ENCODE measurements at regions of chr3 and their contacts with region 1.

Region 1: GRCh38 chr3:33787328-33788009 is 11.0 kb upstream of the PDCD6IP start:
- DNase-seq: peak; percentile 69
- H3K4me3 Mint-ChIP-seq: peak overlapping the region; percentile 28
- H3K27ac Mint-ChIP-seq: no peak overlapping the region
- H3K4me1 Mint-ChIP-seq: no peaks in the 10 kb centered on the region
- H3K27me3 Mint-ChIP-seq: peaks cover 5% of the 10 kb centered on the region

Region 2: DNA sequence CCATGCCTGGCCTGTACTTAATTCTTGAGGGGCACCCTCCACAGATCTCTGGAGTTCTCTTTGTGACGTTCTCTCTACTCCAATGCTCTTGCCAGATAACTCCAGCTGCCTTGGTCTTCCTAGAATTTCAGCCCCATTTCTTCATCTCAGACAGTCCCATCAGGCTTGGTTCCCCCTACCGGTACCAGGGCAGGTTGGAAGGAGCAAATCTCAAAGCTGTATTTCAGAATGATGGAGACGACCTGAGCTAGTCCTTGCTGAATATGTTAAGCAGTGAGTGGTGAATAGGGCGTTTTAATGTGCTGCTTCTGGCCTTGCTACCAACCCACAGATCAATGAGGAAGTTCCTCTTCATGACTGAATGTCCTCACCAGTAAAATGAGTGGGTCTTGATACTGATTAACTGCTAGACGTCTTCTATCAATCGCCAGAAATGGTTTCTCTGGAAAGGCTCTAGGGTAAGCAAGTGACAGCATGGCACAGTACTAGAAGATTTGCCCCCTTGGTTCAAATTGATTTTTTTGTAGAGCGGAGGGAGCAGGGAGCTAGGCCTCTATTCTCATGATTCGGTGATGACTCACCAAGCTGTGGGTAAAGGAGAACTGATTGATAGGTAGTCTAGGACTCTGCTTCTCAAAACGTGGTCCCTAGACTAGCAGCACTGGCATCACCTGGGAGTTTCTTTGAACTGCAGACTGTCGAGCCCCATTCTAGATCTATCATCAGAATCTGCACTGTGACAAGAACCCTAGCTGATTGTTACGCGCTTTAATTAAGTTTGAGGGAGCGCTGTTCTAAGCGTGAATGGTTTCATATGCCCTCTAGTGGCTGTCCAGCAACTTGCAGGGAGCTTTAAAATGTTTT is 415.0 kb before region 1 on chr3:
- CTCF ChIA-PET with region 1: interaction called, 17 read pairs
- POLR2A ChIA-PET with region 1: no interaction called
- intact Hi-C with region 1: loop called (anchors 5 kb)
- DNase-seq: peak; percentile 49
- H3K4me3 Mint-ChIP-seq: no peak overlapping the region
- H3K27ac Mint-ChIP-seq: no peak overlapping the region
- H3K4me1 Mint-ChIP-seq: peaks cover 7% of the 10 kb centered on the region
- H3K27me3 Mint-ChIP-seq: peaks cover 10% of the 10 kb centered on the region

Region 3: DNA sequence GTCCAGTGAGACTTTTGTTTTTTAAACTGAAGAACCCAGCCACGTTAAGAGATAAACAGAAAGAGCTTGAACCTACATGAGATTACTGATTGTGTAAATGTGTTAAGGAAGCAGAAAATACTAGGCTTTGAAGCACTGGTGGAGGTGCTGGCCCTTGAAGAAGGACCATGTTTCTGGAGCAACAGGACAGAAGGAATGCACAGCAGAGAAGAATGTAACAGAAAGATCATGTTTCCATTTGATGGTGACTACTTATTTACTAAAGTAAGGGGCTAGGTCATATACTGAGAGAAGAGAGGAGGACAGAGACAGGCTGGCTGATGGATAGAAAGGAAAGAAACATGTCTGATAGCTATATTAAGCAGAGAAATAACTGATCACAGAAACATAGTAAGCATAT is 158.2 kb before region 1 on chr3:
- CTCF ChIA-PET with region 1: interaction called, 17 read pairs
- POLR2A ChIA-PET with region 1: no interaction called
- intact Hi-C with region 1: no loop called
- DNase-seq: no peak
- H3K4me3 Mint-ChIP-seq: no peak overlapping the region
- H3K27ac Mint-ChIP-seq: no peak overlapping the region
- H3K4me1 Mint-ChIP-seq: no peaks in the 10 kb centered on the region
- H3K27me3 Mint-ChIP-seq: no peaks in the 10 kb centered on the region

Region 4: DNA sequence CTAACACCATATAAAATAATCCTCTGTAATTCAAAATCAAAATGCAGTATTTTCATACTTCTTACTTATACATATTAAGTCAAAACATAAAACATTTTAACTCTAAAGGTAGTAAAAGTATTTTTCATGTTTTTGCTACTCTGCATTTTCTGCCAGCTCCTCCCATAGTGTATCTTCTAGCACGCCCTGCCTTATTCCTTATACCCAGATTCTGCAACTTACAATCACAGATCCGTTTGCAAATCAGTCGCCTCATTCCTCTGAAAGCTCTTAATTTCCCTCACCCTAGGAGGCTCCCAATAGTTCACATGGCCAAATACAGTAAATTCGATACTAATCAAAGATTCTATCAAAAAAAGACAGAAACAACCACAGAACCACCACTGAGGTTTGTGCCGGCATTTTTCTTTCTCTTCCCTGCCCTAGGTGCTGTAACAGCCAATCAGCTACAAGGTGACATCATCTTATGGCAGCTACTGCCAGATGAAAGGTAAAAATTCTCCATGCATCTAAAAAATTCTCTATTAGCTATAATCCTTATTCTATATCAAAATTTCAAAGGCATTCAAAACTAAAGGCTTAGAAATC is 142.3 kb before region 1 on chr3:
- CTCF ChIA-PET with region 1: interaction called, 11 read pairs
- POLR2A ChIA-PET with region 1: no interaction called
- intact Hi-C with region 1: no loop called
- DNase-seq: peak; percentile 33
- H3K4me3 Mint-ChIP-seq: peak overlapping the region; percentile 72
- H3K27ac Mint-ChIP-seq: no peak overlapping the region
- H3K4me1 Mint-ChIP-seq: peaks cover 17% of the 10 kb centered on the region
- H3K27me3 Mint-ChIP-seq: no peaks in the 10 kb centered on the region

Region 5: DNA sequence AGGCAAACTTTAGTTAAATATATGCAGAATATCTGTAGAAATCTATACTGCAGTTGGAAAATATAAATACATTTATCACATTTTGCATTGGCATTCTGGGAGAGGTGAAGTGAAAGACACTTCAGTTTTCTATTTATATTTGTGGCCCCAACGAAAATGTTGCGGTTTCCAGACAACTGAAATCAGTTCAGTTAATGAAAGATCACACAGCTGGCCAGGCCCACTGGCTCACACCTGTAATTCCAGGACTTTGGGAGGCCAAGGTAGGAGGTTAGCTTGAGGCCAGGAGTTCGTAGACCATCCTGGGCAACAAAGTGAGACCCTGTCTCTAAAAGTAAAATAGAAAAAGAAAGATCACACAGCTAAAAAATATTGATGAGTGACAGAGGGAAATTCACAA is 57.5 kb before region 1 on chr3:
- CTCF ChIA-PET with region 1: no interaction called
- POLR2A ChIA-PET with region 1: no interaction called
- intact Hi-C with region 1: no loop called
- DNase-seq: no peak
- H3K4me3 Mint-ChIP-seq: no peak overlapping the region
- H3K27ac Mint-ChIP-seq: no peak overlapping the region
- H3K4me1 Mint-ChIP-seq: no peaks in the 10 kb centered on the region
- H3K27me3 Mint-ChIP-seq: no peaks in the 10 kb centered on the region

Region 6: DNA sequence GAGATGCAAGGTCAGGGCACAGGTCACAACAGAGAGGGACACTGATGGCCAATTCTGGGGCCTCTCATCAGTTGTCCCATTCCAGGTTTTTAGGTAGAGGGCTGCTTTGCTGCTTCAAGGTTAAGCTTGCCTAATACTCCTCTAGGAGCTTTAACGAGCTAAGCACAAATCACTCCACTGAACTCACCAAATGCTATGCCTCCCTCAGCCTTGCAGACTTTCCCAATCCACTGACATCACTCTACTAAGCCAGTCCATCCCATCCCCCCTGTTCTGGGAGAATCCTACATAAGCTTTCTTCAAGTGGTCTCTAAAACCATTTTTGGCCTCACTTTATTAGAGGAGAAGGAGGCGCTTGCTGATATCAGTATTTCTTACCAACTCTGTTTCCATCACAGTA is 13.8 kb before region 1 on chr3:
- CTCF ChIA-PET with region 1: interaction called, 28 read pairs
- POLR2A ChIA-PET with region 1: no interaction called
- intact Hi-C with region 1: no loop called
- DNase-seq: no peak
- H3K4me3 Mint-ChIP-seq: no peak overlapping the region
- H3K27ac Mint-ChIP-seq: no peak overlapping the region
- H3K4me1 Mint-ChIP-seq: no peaks in the 10 kb centered on the region
- H3K27me3 Mint-ChIP-seq: no peaks in the 10 kb centered on the region

Region 7: DNA sequence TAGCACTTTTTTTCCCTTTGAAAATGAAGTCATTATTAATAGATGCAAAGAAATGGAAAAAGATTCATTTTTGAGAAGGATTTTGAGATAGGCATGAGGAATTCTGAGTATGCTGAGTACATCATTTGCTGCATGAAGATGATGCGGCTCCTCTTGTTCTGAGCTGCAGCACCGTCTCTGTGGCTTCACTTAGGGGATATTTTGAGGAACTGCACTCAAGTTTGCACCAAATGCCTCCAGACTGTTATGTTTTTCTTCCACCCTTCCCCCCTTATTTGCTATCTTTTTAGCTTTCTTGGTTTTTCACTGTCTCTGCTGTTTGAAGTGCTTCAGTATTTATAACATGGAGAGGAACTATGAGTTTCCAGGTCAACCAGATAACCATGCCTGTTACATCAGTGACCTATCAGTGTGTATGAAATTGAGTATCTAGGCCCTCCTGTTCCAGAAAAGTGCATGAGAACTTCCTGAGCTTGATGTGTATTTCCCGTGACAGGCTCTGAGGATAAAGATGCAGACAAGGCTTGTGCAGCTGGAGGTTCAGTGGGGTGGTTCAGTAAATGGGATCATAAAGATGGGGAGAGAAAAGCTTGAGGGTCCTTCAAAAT is 139.6 kb after region 1 on chr3:
- CTCF ChIA-PET with region 1: no interaction called
- POLR2A ChIA-PET with region 1: no interaction called
- intact Hi-C with region 1: no loop called
- DNase-seq: no peak
- H3K4me3 Mint-ChIP-seq: no peak overlapping the region
- H3K27ac Mint-ChIP-seq: no peak overlapping the region
- H3K4me1 Mint-ChIP-seq: no peaks in the 10 kb centered on the region
- H3K27me3 Mint-ChIP-seq: no peaks in the 10 kb centered on the region